Activated CD8-positive, alpha-beta T cell treated with anti-CD3 and anti-CD28 coated beads for 36 hours (primary cell): ENCODE measurements at regions of chr11 and their contacts with region 1.

Region 1: GRCh38 chr11:111841370-111842053 is 29.9 kb downstream of the ALG9 start:
- DNase-seq: peak; percentile 97
- ATAC-seq: peak; percentile 94
- H3K4me3 Mint-ChIP-seq: no peak overlapping the region
- H3K27ac Mint-ChIP-seq: no peak overlapping the region
- H3K4me1 Mint-ChIP-seq: peaks cover 11% of the 10 kb centered on the region
- H3K27me3 Mint-ChIP-seq: no peaks in the 10 kb centered on the region
- CTCF ChIP-seq: peak; percentile 95

Region 2: GRCh38 chr11:111565114-111565720 is 276.3 kb before region 1 on chr11:
- CTCF ChIA-PET with region 1: interaction called, 10 read pairs
- POLR2A ChIA-PET with region 1: interaction called, 3 read pairs
- intact Hi-C with region 1: loop called (anchors 1 kb)
- DNase-seq: peak; percentile 80
- ATAC-seq: peak; percentile 45
- H3K4me3 Mint-ChIP-seq: no peak overlapping the region
- H3K27ac Mint-ChIP-seq: no peak overlapping the region
- H3K4me1 Mint-ChIP-seq: peaks cover 4% of the 10 kb centered on the region
- H3K27me3 Mint-ChIP-seq: peaks cover under 1% of the 10 kb centered on the region
- CTCF ChIP-seq: peak; percentile 97

Region 3: GRCh38 chr11:111586388-111586831 is 255.1 kb before region 1 on chr11:
- CTCF ChIA-PET with region 1: interaction called, 9 read pairs
- POLR2A ChIA-PET with region 1: no interaction called
- intact Hi-C with region 1: loop called (anchors 1 kb)
- DNase-seq: peak; percentile 74
- ATAC-seq: peak; percentile 70
- H3K4me3 Mint-ChIP-seq: no peak overlapping the region
- H3K27ac Mint-ChIP-seq: no peak overlapping the region
- H3K4me1 Mint-ChIP-seq: peaks cover 2% of the 10 kb centered on the region
- H3K27me3 Mint-ChIP-seq: peaks cover 3% of the 10 kb centered on the region
- CTCF ChIP-seq: peak; percentile 49

Region 4: DNA sequence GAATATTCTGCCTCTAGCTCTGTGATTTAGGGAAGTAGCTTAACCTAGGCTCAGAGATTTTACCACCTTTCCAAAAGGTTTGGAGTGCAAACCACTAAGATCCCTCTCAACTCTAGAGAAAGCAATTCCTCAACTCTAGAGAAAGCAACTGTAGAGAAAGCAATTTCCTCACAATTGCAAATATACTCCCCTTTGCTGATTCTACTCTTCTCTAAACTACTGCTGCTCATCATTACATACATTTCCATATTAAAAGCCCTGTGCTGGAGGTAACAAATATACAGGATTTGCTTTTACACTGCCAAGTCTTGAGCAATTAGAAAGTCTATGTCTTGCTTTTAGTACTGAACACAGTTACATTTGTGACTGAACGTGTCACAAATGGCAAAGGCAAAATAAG is 18.4 kb before region 1 on chr11:
- CTCF ChIA-PET with region 1: interaction called, 11 read pairs
- POLR2A ChIA-PET with region 1: interaction called, 4 read pairs
- intact Hi-C with region 1: no loop called
- DNase-seq: no peak
- ATAC-seq: no peak
- H3K4me3 Mint-ChIP-seq: no peak overlapping the region
- H3K27ac Mint-ChIP-seq: no peak overlapping the region
- H3K4me1 Mint-ChIP-seq: no peaks in the 10 kb centered on the region
- H3K27me3 Mint-ChIP-seq: no peaks in the 10 kb centered on the region
- CTCF ChIP-seq: no peak

Region 5: GRCh38 chr11:111851636-111852035 is 10.1 kb after region 1 on chr11:
- CTCF ChIA-PET with region 1: interaction called, 18 read pairs
- POLR2A ChIA-PET with region 1: no interaction called
- intact Hi-C with region 1: no loop called
- DNase-seq: no peak
- ATAC-seq: no peak
- H3K4me3 Mint-ChIP-seq: no peak overlapping the region
- H3K27ac Mint-ChIP-seq: no peak overlapping the region
- H3K4me1 Mint-ChIP-seq: peaks cover 7% of the 10 kb centered on the region
- H3K27me3 Mint-ChIP-seq: no peaks in the 10 kb centered on the region
- CTCF ChIP-seq: no peak

Region 6: DNA sequence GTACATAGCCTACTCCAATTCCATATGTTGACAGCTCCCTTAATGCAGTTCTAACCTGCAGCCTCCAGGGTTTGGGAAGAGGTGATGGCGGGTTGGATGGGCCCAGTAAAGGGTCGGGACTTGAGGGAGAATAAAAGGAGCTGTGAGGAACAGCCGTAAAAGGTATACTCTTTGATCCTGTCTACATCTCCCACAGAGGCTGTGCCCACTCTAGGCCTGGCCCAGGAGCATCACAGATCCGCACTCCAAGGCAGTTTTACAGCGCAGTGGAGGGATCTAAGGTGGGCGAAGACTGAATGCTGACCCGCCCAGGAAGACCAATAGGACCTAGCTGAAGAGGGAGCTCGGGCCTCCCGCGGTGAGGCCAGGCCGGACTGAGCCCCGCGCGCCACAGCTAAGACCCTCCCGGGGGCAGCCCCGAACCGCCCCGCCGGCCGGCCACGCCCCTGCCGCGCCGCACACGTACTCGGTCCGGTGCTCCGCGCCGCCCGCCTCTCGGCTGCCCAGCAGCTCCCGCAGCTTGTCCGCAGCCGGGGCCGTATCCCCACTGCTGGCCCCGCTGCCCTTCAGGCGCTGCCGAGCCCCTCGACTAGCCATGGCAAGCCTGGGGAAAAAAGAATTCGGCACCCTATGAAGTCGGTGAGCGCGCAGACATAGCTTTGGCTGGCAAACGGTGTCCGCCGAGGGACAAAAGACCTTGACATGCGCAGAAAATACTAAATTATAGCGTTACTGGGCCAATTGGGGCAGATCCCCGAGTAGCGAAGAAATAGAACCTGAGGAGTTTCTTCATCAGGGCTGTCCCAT is 29.6 kb after region 1 on chr11 and contains the start of gene ALG9:
- CTCF ChIA-PET with region 1: interaction called, 14 read pairs
- POLR2A ChIA-PET with region 1: no interaction called
- intact Hi-C with region 1: no loop called
- DNase-seq: peak; percentile 92
- ATAC-seq: peak; percentile 91
- H3K4me3 Mint-ChIP-seq: peak within 1 kb of the TSS; percentile 94
- H3K27ac Mint-ChIP-seq: peak within 1 kb of the TSS; percentile 91
- H3K4me1 Mint-ChIP-seq: peaks cover 27% of the 10 kb centered on the region
- H3K27me3 Mint-ChIP-seq: no peaks in the 10 kb centered on the region
- CTCF ChIP-seq: peak; percentile 21
- total RNA-seq, gene ALG9: 32.0 to 36.6 TPM